ENCODE measurements at regions of chr21 and their contacts with region 1.

Region 1: GRCh38 chr21:42593007-42593806 is 60.2 kb upstream of the PDE9A start:
- DNase-seq: peak; percentile 45 to 83
- H3K4me3 ChIP-seq: no peak overlapping the region
- H3K4me1 ChIP-seq: no peaks in the 10 kb centered on the region
- H3K27me3 ChIP-seq: no peaks in the 10 kb centered on the region; the same call in 1 of the 2 replicates

Region 2: GRCh38 chr21:42833439-42833815 is 240.2 kb after region 1 on chr21:
- in situ Hi-C with region 1: loop called (anchors 10 kb)
- DNase-seq: peak; percentile 57 to 67
- H3K4me3 ChIP-seq: no peak overlapping the region
- H3K4me1 ChIP-seq: no peaks in the 10 kb centered on the region
- H3K27me3 ChIP-seq: peaks cover 17% of the 10 kb centered on the region

Measured in HAP-1 (cell line).